ENCODE measurements at regions of chr1 and their contacts with region 1.

Region 1: GRCh38 chr1:246497331-246497915 is 9.7 kb downstream of the SMYD3 start:
- DNase-seq: peak; percentile 72
- ATAC-seq: peak; percentile 23; the same call in 1 of the 3 replicates
- H3K4me3 ChIP-seq: no peak overlapping the region
- H3K27ac ChIP-seq: no peak overlapping the region
- H3K4me1 ChIP-seq: no peaks in the 10 kb centered on the region
- H3K27me3 ChIP-seq: no peaks in the 10 kb centered on the region
- CTCF ChIP-seq: peak; percentile 65
- EP300 ChIP-seq: no peak
- POLR2A ChIP-seq: no peak
- RAD21 ChIP-seq: 0 out of 2 replicates have a peak, but pooled peaks have one; percentile 26

Region 2: DNA sequence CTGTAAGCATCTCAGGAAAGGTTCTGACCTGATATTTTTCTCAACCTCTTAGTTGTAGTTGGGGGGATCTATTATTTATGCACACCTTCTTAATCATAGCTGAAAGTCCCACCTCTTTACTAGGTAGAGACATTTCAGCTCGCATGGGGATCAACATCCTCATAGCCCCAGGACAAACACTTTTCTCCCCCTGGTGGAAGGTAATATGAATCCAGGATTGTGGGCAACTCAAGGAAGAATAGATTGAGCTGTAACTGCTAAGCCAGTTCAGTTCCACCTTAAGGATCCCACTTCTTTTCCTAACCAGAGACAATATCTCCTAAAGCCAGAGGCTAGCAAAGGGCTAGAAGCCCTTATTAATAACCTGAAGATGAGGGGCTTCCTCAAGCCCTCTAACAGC is 35.1 kb after region 1 on chr1:
- CTCF ChIA-PET with region 1: interaction called, 10 read pairs
- POLR2A ChIA-PET with region 1: no interaction called
- in situ Hi-C with region 1: no loop called
- intact Hi-C with region 1: loop called (anchors 2 kb)
- DNase-seq: no peak
- ATAC-seq: peak; percentile 75
- H3K4me3 ChIP-seq: no peak overlapping the region
- H3K27ac ChIP-seq: no peak overlapping the region
- H3K4me1 ChIP-seq: peaks cover 20% of the 10 kb centered on the region
- H3K27me3 ChIP-seq: peaks cover 0 to 4% of the 10 kb centered on the region in 2 experiments; a peak in 1 of 5 replicates
- CTCF ChIP-seq: peak; percentile 33; the same call in 1 of the 2 replicates
- EP300 ChIP-seq: no peak
- POLR2A ChIP-seq: no peak
- RAD21 ChIP-seq: no peak

Measured in HepG2 (cell line).